Activated B cell treated with CpG ODN at 0.5 μM for 24 hours (primary cell): ENCODE measurements at regions of chr5 and their contacts with region 1.

Region 1: DNA sequence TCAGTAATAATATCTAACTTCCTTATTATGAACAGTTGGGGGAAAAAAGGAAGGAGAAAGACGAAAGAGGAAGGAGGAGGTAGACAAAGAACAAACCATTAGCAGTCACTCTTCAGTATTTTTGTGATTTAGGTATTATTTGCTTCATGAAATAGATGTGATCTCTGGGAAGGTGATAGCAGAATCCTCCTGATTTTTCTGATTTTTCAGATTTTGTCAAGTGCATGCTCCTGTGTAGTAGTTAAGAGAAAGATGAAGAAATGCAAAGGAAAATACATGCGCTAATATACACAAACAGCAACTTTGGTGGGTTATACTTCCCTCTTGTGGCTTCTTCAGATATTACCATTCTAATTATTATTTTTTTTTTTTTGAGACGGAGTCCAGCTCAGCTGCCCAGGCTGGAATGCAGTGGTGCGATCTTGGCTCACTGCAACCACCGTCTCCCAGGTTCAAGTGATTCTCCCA is 31.6 kb downstream of the LMNB1 start:
- DNase-seq: no peak
- ATAC-seq: peak; percentile 66
- H3K4me3 Mint-ChIP-seq: peak overlapping the region; percentile 66
- H3K27ac Mint-ChIP-seq: peak overlapping the region; percentile 81
- H3K4me1 Mint-ChIP-seq: peaks cover 63% of the 10 kb centered on the region
- H3K27me3 Mint-ChIP-seq: no peaks in the 10 kb centered on the region
- CTCF ChIP-seq: peak; percentile 35

Region 2: DNA sequence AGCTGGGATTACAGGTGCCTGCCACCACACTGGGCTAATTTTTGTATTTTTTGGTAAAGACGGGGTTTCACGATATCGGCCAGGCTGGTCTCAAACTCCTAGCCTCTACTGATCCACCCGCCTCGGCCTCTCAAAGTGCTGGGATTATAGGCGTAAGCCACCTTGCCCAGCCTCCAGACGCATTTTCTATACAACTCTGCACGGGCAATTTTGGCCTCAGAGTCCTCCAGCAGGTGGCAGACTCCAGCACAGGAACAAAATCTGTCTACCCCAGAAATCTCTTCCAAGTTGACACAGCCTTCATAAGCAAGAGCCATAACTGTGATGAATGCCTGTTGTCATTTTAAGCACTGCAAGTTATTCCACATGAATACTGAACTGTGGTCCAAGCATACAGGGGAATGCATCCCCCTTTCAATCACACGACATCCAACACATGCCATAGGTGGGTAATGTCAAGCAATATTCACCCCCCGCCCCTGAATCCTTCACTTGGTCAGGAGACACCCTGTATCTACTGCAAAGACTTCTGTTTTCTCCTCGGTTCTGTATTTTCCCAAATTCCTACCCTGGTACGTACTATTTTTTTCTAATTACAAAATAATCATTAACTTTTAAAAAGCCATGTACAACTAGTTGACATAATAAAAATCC is 264.3 kb before region 1 on chr5:
- CTCF ChIA-PET with region 1: no interaction called
- POLR2A ChIA-PET with region 1: no interaction called
- intact Hi-C with region 1: loop called (anchors 2 kb)
- DNase-seq: no peak
- ATAC-seq: no peak
- H3K4me3 Mint-ChIP-seq: no peak overlapping the region
- H3K27ac Mint-ChIP-seq: no peak overlapping the region
- H3K4me1 Mint-ChIP-seq: no peaks in the 10 kb centered on the region
- H3K27me3 Mint-ChIP-seq: no peaks in the 10 kb centered on the region
- CTCF ChIP-seq: peak; percentile 45

Region 3: DNA sequence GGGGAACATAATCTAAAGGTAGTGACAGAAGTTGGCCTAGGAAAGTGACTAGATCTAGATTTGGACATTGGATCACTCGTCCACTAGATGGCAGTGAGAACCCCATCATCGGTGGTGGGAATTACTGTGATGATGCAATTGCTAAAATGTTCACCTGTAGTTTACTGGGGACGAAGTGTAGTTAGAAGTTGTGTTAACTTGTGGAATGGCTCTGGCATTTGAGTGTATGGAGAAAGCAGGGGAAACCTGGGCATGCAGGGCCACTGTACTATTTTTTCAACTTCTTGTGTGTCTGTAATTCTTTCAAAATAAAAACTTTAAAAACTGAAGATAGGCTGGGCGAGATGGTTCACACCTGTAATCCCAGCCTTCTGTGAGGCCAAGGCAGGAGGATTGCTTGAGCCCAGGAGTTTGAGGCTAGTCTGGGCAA is 132.3 kb before region 1 on chr5:
- CTCF ChIA-PET with region 1: interaction called, 32 read pairs
- POLR2A ChIA-PET with region 1: no interaction called
- intact Hi-C with region 1: loop called (anchors 1 kb)
- DNase-seq: peak; percentile 19
- ATAC-seq: peak; percentile 82
- H3K4me3 Mint-ChIP-seq: no peak overlapping the region
- H3K27ac Mint-ChIP-seq: peak overlapping the region; percentile 4
- H3K4me1 Mint-ChIP-seq: peaks cover 3% of the 10 kb centered on the region
- H3K27me3 Mint-ChIP-seq: no peaks in the 10 kb centered on the region
- CTCF ChIP-seq: peak; percentile 67